ENCODE measurements at regions of chr7 and their contacts with region 1.

Region 1: DNA sequence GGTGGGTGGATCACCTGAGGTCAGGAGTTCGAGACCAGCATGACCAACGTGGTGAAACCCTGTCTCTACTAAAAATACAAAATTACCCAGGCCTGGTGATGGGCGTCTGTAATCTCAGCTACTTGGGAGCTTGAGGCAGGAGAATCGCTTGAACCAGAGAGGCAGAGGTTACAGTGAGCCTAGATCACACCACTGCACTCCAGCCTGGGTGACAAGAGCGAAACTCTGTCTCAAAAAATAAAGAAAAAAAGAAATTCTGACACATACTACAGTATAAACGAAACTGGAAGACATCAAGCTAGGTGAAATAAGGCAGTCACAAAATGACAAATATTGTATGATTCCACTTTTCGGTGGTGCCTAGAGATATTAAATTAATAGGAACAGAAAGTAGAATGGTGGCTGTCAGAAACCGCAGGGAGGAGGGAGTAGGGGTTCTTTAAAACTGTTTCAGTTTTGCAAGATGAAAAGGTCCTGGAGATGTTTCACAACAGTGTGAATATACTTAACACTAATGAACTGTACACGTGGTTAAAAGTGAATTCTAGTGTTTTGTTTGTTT is 23.2 kb downstream of the PILRA start:
- DNase-seq: peak; percentile 82
- ATAC-seq: peak; percentile 92
- H3K4me3 Mint-ChIP-seq: peak overlapping the region; percentile 1
- H3K27ac Mint-ChIP-seq: peak overlapping the region; percentile 40
- H3K4me1 Mint-ChIP-seq: peaks cover 26% of the 10 kb centered on the region
- H3K27me3 Mint-ChIP-seq: peaks cover 20% of the 10 kb centered on the region

Region 2: DNA sequence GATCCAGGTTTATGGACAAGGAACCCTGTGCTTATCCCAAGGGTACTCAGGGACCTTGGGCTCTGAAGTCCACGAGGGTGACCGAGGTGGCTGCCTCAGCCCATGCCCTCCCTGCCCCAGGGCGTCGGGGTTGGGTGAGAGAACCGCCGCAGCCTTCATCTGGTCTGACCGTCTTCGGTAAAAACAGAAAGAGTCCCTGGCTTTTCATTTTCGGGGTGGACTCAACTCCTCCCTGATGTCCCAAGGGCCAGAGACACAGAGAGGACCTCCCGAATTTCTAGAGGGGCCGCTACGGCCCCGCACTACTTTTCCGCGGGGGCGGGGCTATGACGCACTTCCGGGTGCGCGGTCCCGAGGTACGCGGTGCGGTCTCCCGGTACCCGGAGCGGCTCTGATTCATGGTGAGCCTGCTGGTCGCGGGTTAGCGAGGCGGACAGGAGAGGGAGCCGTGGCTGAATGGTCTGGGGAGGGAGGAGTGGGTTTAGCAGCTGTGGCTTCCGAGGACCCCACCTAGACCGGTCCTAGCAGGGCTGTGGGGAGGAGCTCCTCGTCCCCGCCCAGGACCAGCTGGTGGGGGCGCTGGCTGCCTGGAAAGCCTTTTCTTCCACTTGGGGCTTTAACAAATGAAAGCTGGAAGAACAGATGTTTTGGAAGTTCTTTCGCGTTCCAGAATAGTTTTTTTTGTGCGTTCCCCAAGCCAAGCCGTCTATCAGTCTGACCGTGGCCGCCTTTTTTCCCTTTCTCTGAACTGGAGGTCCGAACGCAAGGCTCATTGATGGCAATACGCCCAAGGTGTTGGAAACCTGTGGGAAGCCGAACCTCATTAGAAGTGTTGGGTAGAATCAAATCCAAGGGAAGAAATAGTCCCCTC is 346.8 kb before region 1 on chr7 and contains the start of gene ZSCAN21:
- CTCF ChIA-PET with region 1: no interaction called
- POLR2A ChIA-PET with region 1: no interaction called
- intact Hi-C with region 1: no loop called
- DNase-seq: peak; percentile 89
- ATAC-seq: peak; percentile 90
- H3K4me3 Mint-ChIP-seq: peak within 1 kb of the TSS; percentile 85
- H3K27ac Mint-ChIP-seq: peak within 1 kb of the TSS; percentile 86
- H3K4me1 Mint-ChIP-seq: peaks cover 17% of the 10 kb centered on the region
- H3K27me3 Mint-ChIP-seq: no peaks in the 10 kb centered on the region
- total RNA-seq, gene ZSCAN21: 6.4 to 7.4 TPM

Region 3: DNA sequence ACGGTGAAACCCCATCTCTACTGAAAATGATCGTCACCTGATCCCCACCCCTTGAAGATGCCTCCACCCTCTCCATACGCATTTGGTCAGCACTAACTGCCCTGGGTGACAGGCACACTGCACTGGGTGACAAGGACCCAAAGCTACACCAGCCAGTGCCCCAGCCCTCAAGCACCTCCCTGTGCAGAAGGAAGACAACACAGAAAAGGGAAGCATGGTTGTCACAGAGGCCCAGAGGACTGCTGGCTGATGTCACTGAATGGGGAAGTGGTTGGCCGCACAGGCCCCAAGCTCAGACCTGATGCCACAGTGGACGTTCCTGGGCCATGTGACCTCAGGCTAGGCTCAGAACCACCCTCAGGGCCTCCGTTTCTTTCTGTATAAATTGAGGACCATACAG is 27.4 kb before region 1 on chr7:
- CTCF ChIA-PET with region 1: interaction called, 4 read pairs
- POLR2A ChIA-PET with region 1: no interaction called
- intact Hi-C with region 1: loop called (anchors 1 to 2 kb)
- DNase-seq: no peak
- ATAC-seq: no peak
- H3K4me3 Mint-ChIP-seq: no peak overlapping the region
- H3K27ac Mint-ChIP-seq: no peak overlapping the region
- H3K4me1 Mint-ChIP-seq: peaks cover 40% of the 10 kb centered on the region
- H3K27me3 Mint-ChIP-seq: no peaks in the 10 kb centered on the region

Region 4: DNA sequence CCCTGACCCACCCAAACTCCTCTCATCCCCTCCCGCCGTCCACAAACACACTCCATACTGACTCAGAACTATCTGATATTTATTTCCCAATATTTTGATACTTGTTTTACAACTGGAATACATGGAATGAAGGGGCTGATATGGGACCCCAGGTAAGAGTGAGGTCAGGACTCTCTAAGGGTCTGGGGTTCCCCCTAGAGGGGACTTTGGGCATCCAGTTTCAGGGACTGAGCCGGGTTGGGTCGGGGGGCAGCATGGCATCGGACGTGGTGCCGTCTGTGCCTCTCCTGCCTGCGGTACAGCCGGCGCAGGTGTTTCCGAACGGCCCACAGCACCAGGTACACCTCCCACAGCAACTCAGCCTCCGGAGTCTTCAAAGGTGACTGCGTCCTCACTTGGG is 60.1 kb after region 1 on chr7:
- CTCF ChIA-PET with region 1: no interaction called
- POLR2A ChIA-PET with region 1: no interaction called
- intact Hi-C with region 1: no loop called
- DNase-seq: no peak
- ATAC-seq: no peak
- H3K4me3 Mint-ChIP-seq: no peak overlapping the region
- H3K27ac Mint-ChIP-seq: no peak overlapping the region
- H3K4me1 Mint-ChIP-seq: peaks cover 15% of the 10 kb centered on the region
- H3K27me3 Mint-ChIP-seq: no peaks in the 10 kb centered on the region

Measured in activated CD4-positive, alpha-beta T cell treated with anti-CD3 and anti-CD28 coated beads for 36 hours (primary cell).